Esophagus squamous epithelium (tissue), 5 donors: ENCODE measurements at regions of chr3 and their contacts with region 1.

Region 1: DNA sequence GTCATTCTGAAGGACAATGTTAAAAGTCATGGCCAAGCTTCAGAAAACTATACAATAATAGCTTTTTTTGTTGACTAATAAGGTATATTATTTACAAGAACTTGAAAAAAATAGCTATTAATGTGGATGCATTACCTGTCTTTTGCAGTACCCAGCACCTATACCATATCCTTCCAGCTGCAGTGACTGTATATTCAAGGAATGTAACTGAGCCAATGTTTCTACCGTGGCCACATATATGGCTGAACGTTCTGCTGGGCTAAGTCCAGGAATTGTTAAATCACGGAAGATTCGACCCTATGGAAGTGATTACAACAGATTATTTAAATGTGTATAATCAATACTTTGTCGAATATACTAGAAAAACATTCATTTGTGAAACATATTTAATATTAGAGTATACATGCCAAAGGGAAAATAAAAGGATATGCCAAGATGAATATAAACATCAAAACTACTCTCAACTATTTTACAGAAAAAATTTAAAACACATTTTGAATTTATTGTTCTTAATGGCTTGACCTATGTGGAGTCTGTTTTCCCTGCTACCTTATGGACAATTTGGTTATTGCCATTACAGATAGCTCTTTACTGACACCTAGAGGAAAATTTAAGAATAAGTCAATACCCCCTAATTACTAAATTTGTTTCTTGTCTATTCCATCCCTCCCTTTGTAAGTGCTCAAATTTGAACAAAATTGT is 17.6 kb downstream of the ACAD11 start:
- DNase-seq: no peak
- H3K4me3 ChIP-seq: no peak overlapping the region
- H3K27ac ChIP-seq: no peak overlapping the region
- H3K4me1 ChIP-seq: peaks cover 0 to 8% (median 0%) of the 10 kb centered on the region in 3 donors
- H3K27me3 ChIP-seq: no peaks in the 10 kb centered on the region
- CTCF ChIP-seq: peak; percentile 32 to 89 (median 77)
- POLR2A ChIP-seq: no peak

Region 2: DNA sequence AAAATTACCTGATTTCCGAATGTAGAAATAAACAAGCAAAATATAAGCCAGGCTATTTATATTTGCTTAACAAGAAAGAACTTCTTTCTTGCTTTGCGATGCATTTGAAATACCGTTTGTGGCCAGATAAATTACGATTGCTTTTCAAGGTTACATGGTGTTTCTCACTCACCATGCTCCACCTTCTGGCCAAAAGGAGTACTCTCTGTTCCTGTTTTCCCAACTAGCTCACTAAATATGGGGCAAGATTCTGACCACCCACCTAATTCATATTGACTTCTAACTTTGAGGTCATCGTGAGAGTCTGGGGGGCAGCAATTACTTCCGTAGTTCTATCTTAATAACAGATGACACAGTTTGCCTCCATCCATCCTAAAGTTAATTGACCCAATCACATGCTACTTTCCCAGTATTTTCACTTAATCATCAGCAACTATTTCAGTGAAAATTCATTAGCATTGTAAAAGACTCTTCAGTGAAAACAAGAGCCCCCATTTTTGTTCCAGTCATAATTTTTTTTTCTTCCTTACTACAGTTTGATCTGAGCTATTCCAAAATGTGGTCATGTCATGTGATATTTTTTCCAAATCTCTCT is 298.9 kb before region 1 on chr3:
- intact Hi-C with region 1: no loop called
- DNase-seq: no peak
- H3K4me3 ChIP-seq: no peak overlapping the region
- H3K27ac ChIP-seq: peak overlapping the region in 1 of 4 donors; percentile 22
- H3K4me1 ChIP-seq: peaks cover 4 to 53% (median 6%) of the 10 kb centered on the region in 3 donors
- H3K27me3 ChIP-seq: no peaks in the 10 kb centered on the region
- CTCF ChIP-seq: peak; percentile 29 to 88 (median 84)
- POLR2A ChIP-seq: no peak

Region 3: GRCh38 chr3:132522353-132522752 is 119.6 kb before region 1 on chr3:
- intact Hi-C with region 1: no loop called
- DNase-seq: no peak
- H3K4me3 ChIP-seq: no peak overlapping the region
- H3K27ac ChIP-seq: no peak overlapping the region
- H3K4me1 ChIP-seq: no peaks in the 10 kb centered on the region
- H3K27me3 ChIP-seq: no peaks in the 10 kb centered on the region
- CTCF ChIP-seq: no peak
- POLR2A ChIP-seq: no peak

Region 4: GRCh38 chr3:132535575-132536441 is 106.2 kb before region 1 on chr3:
- intact Hi-C with region 1: loop called (anchors 5 kb)
- DNase-seq: no peak
- H3K4me3 ChIP-seq: no peak overlapping the region
- H3K27ac ChIP-seq: no peak overlapping the region
- H3K4me1 ChIP-seq: peaks cover 0 to 17% (median 0%) of the 10 kb centered on the region in 3 donors
- H3K27me3 ChIP-seq: no peaks in the 10 kb centered on the region
- CTCF ChIP-seq: peak; percentile 53 to 76 (median 62)
- POLR2A ChIP-seq: no peak